ENCODE measurements at regions of chr7 and their contacts with region 1.

Region 1: GRCh38 chr7:132580717-132581285 is 4.5 kb upstream of the PLXNA4 start:
- DNase-seq: no peak

Region 2: GRCh38 chr7:131945313-131945911 is 635.4 kb before region 1 on chr7:
- intact Hi-C with region 1: loop called (anchors 5 kb)
- DNase-seq: no peak

Region 3: DNA sequence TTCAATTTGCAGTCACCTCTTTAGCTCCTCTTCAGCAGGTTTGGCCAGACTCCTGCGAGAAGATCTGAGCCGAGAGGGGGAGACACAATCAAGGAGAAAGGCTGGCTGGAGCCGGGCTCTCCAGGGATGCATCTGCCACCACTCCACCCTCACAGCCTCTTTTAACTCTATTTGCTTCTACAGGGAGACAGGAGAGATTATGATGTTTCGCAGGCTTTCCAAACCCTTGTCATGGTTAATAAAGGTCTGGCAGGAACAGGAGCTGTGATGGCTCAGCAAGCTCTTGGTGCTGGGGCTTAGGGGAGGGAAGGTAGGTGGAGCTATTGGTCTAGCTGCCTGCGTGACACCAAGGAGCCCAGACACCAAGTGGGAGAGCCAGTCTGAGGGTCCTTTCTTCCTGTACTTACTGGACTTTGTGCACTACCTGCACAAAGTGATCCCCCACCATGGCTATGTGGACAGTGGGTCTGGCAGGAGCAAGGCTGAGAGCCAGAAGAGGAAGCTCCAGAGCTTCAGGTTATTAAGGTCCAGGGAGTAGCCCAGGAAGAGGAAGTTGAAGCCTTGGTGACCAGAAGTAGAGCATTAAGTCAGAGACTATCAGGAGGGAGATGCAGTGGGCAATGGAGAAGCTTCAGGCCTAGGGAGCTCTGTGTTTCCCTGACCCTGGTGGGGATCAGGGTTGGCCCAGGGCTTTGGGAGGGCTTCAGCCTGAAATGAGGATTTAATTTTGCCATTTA is 576.1 kb before region 1 on chr7:
- intact Hi-C with region 1: loop called (anchors 5 kb)
- DNase-seq: no peak

Region 4: GRCh38 chr7:132065193-132065988 is 515.4 kb before region 1 on chr7:
- intact Hi-C with region 1: loop called (anchors 5 kb)
- DNase-seq: no peak

Region 5: GRCh38 chr7:132318352-132319318 is 262.2 kb before region 1 on chr7:
- intact Hi-C with region 1: loop called (anchors 1 kb)
- DNase-seq: peak; percentile 91

Region 6: DNA sequence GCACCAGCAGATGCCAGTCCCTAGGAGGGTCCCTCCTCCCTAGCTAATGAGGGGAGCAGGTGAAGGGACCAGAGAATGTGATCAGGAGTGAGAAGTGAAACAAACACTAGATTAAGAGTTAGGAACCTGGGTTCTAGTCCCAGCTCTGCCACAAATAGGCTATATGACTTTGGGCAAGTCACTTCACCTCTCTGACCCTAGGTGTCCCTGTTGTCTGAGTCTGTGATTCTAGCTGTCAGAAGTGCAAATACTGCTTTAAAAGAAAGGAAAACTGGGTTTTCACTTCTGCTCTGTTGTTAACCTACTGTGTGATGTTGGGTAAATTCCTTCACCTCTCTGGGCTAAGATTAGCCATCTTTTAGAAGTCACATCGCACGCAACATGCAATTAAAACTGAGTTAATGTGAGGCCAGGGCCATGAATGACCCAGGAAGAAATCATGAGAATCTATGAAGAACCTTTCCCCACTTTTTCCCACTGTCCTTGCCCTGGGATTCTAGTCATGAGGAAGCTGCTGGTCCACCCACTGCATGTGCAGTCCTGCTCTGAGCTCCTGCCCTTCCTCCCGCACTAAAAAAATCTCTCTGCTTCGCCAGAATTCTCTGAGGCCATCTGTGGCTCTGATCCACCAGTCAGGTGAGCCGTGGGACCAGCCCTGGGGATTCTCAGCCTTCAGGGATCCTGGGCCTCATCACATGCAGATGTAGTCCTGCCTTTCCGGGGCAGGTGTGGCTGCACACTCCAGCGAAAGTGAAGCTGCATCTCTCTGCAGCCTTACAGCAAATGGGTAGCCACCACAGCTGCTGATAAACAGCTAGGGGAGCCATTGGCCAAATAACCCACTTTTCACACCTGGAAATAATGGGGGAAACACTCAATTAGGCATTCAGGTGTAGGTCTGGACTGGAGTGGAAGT is 186.3 kb before region 1 on chr7:
- intact Hi-C with region 1: loop called (anchors 5 kb)
- DNase-seq: peak; percentile 57